Activated naive CD4-positive, alpha-beta T cell treated with anti-CD3 and anti-CD28 coated beads for 36 hours (primary cell): ENCODE measurements at regions of chr1 and their contacts with region 1.

Region 1: DNA sequence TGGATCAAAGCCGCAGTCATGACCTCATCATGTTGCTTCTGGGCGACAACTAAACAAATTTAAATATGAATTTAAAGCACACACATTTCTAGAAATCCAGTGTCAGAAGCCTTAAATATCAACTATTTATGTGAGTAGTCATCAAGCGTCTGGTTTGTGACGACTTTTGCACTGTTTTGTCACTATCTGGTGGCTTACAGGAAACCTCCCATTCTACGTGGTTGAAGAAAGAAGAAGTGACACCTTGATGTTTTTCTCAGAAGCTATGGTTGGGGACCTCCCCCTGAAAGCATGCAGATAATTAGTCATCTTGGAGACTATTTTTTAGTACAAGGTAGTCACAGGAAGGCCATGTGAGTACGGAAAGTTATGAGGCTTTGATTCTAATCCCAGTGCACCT is 58.5 kb downstream of the TENT5C start:
- DNase-seq: peak; percentile 89
- H3K4me3 Mint-ChIP-seq: no peak overlapping the region
- H3K27ac Mint-ChIP-seq: peak overlapping the region; percentile 71
- H3K4me1 Mint-ChIP-seq: peaks cover 71% of the 10 kb centered on the region
- H3K27me3 Mint-ChIP-seq: peaks cover 6% of the 10 kb centered on the region

Region 2: DNA sequence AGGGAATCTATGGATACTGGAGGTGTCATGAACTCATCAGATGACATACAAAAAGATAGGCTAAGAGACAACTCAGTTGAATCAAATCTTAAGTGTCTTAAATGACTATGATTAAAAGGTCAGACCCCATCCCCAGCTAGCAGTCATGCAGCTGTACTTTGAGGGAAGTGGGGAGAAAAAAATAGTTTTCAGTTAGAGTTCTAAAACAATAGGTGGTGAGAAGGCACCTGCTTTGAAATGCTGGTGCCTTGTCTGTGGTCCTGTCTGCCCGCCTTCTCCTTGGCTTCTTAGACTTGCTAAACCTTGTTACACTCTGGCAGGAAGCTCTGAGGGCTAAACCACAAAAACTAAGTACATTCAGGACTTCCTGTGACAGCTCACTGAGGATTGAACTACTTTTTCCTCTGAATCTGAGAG is 894.7 kb before region 1 on chr1:
- CTCF ChIA-PET with region 1: no interaction called
- intact Hi-C with region 1: loop called (anchors 2 kb)
- DNase-seq: peak; percentile 88
- H3K4me3 Mint-ChIP-seq: peak overlapping the region; percentile 100
- H3K27ac Mint-ChIP-seq: peak overlapping the region; percentile 100
- H3K4me1 Mint-ChIP-seq: peaks cover 90% of the 10 kb centered on the region
- H3K27me3 Mint-ChIP-seq: no peaks in the 10 kb centered on the region

Region 3: GRCh38 chr1:116934586-116935207 is 729.6 kb before region 1 on chr1:
- CTCF ChIA-PET with region 1: no interaction called
- intact Hi-C with region 1: loop called (anchors 5 kb)
- DNase-seq: no peak
- H3K4me3 Mint-ChIP-seq: no peak overlapping the region
- H3K27ac Mint-ChIP-seq: no peak overlapping the region
- H3K4me1 Mint-ChIP-seq: peaks cover 18% of the 10 kb centered on the region
- H3K27me3 Mint-ChIP-seq: no peaks in the 10 kb centered on the region

Region 4: GRCh38 chr1:117367047-117368018 is 297.0 kb before region 1 on chr1 and contains the start of gene MAN1A2:
- CTCF ChIA-PET with region 1: no interaction called
- intact Hi-C with region 1: loop called (anchors 1 kb)
- DNase-seq: peak; percentile 76
- H3K4me3 Mint-ChIP-seq: peak within 1 kb of the TSS; percentile 94
- H3K27ac Mint-ChIP-seq: peak within 1 kb of the TSS; percentile 94
- H3K4me1 Mint-ChIP-seq: peaks cover 48% of the 10 kb centered on the region
- H3K27me3 Mint-ChIP-seq: no peaks in the 10 kb centered on the region
- total RNA-seq, gene MAN1A2: 14.6 to 17.4 TPM

Region 5: GRCh38 chr1:117612517-117613248 is 51.6 kb before region 1 on chr1:
- CTCF ChIA-PET with region 1: no interaction called
- intact Hi-C with region 1: loop called (anchors 1 kb)
- DNase-seq: no peak
- H3K4me3 Mint-ChIP-seq: no peak overlapping the region
- H3K27ac Mint-ChIP-seq: no peak overlapping the region
- H3K4me1 Mint-ChIP-seq: peaks cover 49% of the 10 kb centered on the region
- H3K27me3 Mint-ChIP-seq: peaks cover 8% of the 10 kb centered on the region